AG04450 (cell line): ENCODE measurements at regions of chr9 and their contacts with region 1.

Region 1: DNA sequence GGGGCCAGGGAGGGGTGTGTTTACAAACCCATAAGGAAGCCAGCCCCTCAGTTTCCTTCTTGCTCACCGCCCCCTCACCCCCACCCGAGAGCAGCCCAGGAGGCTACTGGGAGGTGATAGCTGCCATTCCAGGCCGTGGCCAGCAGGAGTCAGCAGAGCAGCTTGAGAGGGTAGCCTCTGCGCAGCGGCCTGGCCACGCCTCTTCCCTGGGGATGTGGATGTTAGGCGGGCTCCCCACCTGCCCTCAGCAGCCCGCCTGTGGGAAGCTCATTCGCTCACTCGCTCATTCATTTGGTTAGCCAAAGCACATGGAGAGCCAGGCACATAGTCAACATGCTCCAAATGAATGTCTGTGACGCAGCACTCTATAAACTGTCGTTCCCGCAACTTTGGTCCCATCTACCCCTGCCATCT is 6.1 kb upstream of the DPM2 start:
- DNase-seq: no peak
- H3K4me3 ChIP-seq: no peak overlapping the region
- H3K27ac ChIP-seq: no peak overlapping the region
- H3K27me3 ChIP-seq: no peaks in the 10 kb centered on the region
- CTCF ChIP-seq: peak; percentile 96

Region 2: GRCh38 chr9:127955294-127956035 is 11.7 kb after region 1 on chr9:
- CTCF ChIA-PET with region 1: interaction called, 22 read pairs
- POLR2A ChIA-PET with region 1: no interaction called
- DNase-seq: no peak
- H3K4me3 ChIP-seq: no peak overlapping the region
- H3K27ac ChIP-seq: no peak overlapping the region
- H3K27me3 ChIP-seq: no peaks in the 10 kb centered on the region
- CTCF ChIP-seq: no peak

Region 3: DNA sequence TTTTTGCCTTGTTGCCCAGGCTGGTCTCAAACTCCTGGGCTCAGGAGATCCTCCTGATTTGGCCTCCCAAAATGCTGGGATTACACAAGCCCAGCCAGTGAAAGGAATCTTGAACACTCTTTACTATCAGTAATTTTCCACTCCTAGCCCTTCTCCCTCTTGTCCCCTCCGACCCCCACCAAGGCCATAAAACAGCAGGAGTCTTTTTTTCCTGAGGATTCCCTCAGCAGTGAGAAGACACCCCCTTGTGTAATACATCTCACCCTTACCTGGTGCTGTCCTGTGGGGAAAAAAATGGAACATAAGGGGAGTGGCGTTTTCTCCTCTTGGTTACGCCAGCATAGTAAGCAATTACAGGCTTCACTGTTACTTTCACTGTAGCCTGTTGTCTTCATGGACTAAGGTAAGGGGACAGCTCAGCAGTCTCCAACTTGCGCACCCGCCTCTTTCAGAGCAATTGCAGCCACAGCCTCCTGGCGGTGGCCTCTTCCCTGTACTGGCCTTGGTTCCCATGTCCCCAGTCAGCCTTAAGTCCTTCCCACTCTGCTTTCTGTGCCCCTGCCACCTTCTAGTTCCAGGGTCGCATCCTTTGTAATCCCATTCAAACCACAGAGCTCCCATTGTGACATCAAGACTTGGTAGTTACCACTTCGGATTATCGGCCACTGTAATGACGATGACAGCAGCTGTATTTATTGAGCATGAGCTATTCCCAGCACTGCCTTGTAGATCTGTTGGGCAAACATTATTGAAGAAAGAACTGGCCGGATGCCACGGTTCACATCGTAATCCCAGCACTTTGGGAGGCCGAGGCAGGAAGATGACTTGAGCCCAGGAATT is 113.4 kb after region 1 on chr9:
- CTCF ChIA-PET with region 1: interaction called, 10 read pairs
- POLR2A ChIA-PET with region 1: no interaction called
- DNase-seq: no peak
- H3K4me3 ChIP-seq: no peak overlapping the region
- H3K27ac ChIP-seq: no peak overlapping the region
- H3K27me3 ChIP-seq: no peaks in the 10 kb centered on the region
- CTCF ChIP-seq: no peak

Region 4: DNA sequence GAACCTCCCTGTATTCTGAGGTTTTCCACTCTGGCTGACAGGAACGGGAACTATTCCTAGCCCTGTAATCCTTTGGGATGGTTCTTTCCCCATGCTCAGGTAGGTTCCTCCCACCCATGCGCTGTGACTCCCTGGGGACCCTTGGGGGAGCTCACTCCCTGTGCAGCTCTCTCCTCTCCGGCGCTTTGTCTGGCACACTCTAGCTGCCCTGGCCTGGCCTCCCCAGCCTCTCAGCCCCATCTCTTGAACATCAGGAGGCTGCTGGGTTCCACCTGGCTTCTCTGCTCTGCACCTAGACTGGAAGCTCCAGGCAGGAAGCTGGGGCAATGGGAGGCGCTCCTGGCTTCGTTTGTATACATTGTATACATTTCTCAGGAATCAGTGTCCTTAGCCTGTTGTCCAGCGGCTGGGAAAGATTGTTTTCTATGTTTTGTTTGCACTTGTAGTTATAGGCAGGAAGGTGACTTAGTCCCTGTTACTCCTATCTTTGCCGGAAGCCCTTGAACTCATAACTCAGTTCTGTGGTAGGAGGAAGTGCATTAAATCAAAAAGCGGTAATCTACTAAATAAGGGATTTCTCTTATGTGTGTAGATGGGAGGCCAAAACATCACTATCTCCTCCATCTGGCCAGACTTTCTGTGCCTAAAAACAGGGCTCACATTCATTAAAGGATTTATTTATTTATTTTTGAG is 144.7 kb after region 1 on chr9:
- CTCF ChIA-PET with region 1: interaction called, 28 read pairs
- POLR2A ChIA-PET with region 1: no interaction called
- DNase-seq: no peak
- H3K4me3 ChIP-seq: no peak overlapping the region
- H3K27ac ChIP-seq: no peak overlapping the region
- H3K27me3 ChIP-seq: no peaks in the 10 kb centered on the region
- CTCF ChIP-seq: no peak